ENCODE measurements at regions of chr3 and their contacts with region 1.

Region 1: GRCh38 chr3:137946345-137946973 is 63.5 kb upstream of the CLDN18 start:
- DNase-seq: peak; percentile 81
- H3K4me3 Mint-ChIP-seq: no peak overlapping the region
- H3K27ac Mint-ChIP-seq: no peak overlapping the region
- H3K4me1 Mint-ChIP-seq: no peaks in the 10 kb centered on the region
- H3K27me3 Mint-ChIP-seq: peaks cover 24% of the 10 kb centered on the region
- CTCF ChIP-seq: peak; percentile 77

Region 2: GRCh38 chr3:137032465-137033120 is 913.9 kb before region 1 on chr3:
- CTCF ChIA-PET with region 1: no interaction called
- POLR2A ChIA-PET with region 1: no interaction called
- intact Hi-C with region 1: loop called (anchors 5 kb)
- DNase-seq: peak; percentile 57
- H3K4me3 Mint-ChIP-seq: no peak overlapping the region
- H3K27ac Mint-ChIP-seq: peak overlapping the region; percentile 36
- H3K4me1 Mint-ChIP-seq: peaks cover 8% of the 10 kb centered on the region
- H3K27me3 Mint-ChIP-seq: no peaks in the 10 kb centered on the region
- CTCF ChIP-seq: peak; percentile 77

Region 3: GRCh38 chr3:137105277-137105977 is 841.0 kb before region 1 on chr3:
- CTCF ChIA-PET with region 1: interaction called, 21 read pairs
- POLR2A ChIA-PET with region 1: interaction called, 3 read pairs
- intact Hi-C with region 1: loop called (anchors 1 kb)
- DNase-seq: peak; percentile 69
- H3K4me3 Mint-ChIP-seq: no peak overlapping the region
- H3K27ac Mint-ChIP-seq: no peak overlapping the region
- H3K4me1 Mint-ChIP-seq: no peaks in the 10 kb centered on the region
- H3K27me3 Mint-ChIP-seq: no peaks in the 10 kb centered on the region
- CTCF ChIP-seq: peak; percentile 56

Region 4: DNA sequence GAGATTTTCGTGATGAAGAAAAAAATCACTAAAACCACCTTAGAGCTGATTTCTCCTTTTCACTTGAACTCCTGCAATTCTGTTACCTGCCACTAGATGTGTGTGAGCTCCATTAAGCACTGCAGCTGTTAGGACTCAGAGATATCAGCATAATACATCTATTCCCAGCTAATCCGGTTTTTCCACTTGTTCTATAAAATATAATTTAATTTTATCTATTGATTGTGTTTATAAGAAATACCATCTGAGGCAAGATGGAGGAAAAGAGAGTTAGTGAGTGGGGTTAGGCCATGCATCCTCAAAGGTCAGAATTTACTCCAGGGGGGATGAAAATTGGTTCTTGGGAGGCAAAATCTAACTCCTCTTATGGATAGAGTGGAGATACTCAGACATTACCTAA is 836.0 kb before region 1 on chr3:
- CTCF ChIA-PET with region 1: interaction called, 21 read pairs
- POLR2A ChIA-PET with region 1: interaction called, 3 read pairs
- intact Hi-C with region 1: loop called (anchors 1 kb)
- DNase-seq: peak; percentile 50
- H3K4me3 Mint-ChIP-seq: no peak overlapping the region
- H3K27ac Mint-ChIP-seq: no peak overlapping the region
- H3K4me1 Mint-ChIP-seq: no peaks in the 10 kb centered on the region
- H3K27me3 Mint-ChIP-seq: no peaks in the 10 kb centered on the region
- CTCF ChIP-seq: peak; percentile 77

Region 5: DNA sequence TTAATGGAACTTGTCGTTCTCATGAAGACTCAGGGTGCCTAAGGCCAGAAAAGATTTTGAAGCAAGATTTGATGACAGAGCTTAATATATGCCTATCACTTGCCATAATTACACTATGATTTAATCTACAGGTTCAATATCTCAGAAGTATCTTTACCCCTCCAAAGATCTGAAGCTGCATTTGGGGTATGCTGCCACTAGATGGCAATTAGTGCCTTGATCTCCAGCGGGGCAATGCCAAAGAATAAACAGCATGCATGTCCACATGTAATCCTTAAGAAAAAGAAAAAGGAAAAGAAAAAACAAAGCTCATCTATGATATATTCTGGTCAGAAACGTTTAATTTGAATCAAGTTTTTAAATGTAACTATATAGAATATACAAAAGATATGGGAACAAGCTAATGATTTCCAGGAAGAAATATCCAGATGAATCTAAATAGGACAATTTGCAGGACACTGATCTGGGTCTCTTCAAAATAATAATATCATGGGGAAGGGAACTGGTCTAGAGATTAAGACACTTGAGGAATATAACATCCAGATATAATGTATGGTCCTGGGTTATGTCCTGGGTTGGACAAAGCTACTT is 237.4 kb before region 1 on chr3:
- CTCF ChIA-PET with region 1: interaction called, 14 read pairs
- POLR2A ChIA-PET with region 1: no interaction called
- intact Hi-C with region 1: loop called (anchors 1 kb)
- DNase-seq: peak; percentile 46
- H3K4me3 Mint-ChIP-seq: no peak overlapping the region
- H3K27ac Mint-ChIP-seq: no peak overlapping the region
- H3K4me1 Mint-ChIP-seq: no peaks in the 10 kb centered on the region
- H3K27me3 Mint-ChIP-seq: peaks cover 54% of the 10 kb centered on the region
- CTCF ChIP-seq: peak; percentile 65

Region 6: GRCh38 chr3:137792626-137793271 is 153.7 kb before region 1 on chr3:
- CTCF ChIA-PET with region 1: no interaction called
- POLR2A ChIA-PET with region 1: no interaction called
- intact Hi-C with region 1: no loop called
- DNase-seq: peak; percentile 49
- H3K4me3 Mint-ChIP-seq: no peak overlapping the region
- H3K27ac Mint-ChIP-seq: no peak overlapping the region
- H3K4me1 Mint-ChIP-seq: no peaks in the 10 kb centered on the region
- H3K27me3 Mint-ChIP-seq: peaks cover 74% of the 10 kb centered on the region
- CTCF ChIP-seq: peak; percentile 52

Region 7: DNA sequence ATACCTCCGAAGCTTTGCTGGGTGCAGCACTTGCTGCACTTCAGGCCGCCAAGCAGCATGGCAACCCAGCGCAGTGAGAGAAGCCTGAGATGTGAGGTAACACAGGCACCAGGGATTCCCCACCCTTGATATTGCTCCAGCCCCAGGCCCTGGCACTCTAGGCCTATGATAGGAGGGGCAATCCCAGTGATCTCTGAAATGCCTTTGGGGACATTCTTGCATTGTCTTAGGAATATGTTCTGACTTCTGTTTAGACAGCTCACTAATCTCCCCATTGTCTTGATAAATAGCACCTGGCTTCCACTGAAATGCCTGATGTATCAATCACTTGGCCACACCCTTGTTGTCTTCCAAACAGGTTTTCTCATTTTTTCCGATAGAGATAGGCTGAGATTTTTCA is 79.5 kb before region 1 on chr3:
- CTCF ChIA-PET with region 1: no interaction called
- POLR2A ChIA-PET with region 1: no interaction called
- intact Hi-C with region 1: no loop called
- DNase-seq: peak; percentile 8
- H3K4me3 Mint-ChIP-seq: no peak overlapping the region
- H3K27ac Mint-ChIP-seq: no peak overlapping the region
- H3K4me1 Mint-ChIP-seq: no peaks in the 10 kb centered on the region
- H3K27me3 Mint-ChIP-seq: peaks cover 46% of the 10 kb centered on the region
- CTCF ChIP-seq: no peak

Region 8: DNA sequence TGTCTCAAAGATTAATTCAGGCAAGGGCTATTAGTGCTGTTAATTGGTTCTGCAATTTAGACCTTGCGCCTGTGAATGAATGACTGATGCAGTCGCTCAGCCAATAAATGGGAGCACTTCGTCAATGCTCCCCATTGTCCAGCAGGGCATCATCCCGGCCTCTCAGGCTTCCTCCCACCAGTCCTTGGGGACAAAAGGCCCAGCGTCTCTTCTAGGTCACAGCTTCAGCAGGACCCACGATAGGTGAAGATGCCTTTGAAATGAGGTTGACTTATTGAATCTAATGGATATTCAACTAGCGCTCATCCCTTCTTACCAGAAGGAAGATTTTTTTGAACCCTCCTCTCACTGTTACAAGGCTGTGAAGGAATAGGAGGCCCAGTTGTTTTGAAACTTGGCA is 15.8 kb after region 1 on chr3:
- CTCF ChIA-PET with region 1: interaction called, 15 read pairs
- POLR2A ChIA-PET with region 1: no interaction called
- intact Hi-C with region 1: no loop called
- DNase-seq: no peak
- H3K4me3 Mint-ChIP-seq: no peak overlapping the region
- H3K27ac Mint-ChIP-seq: no peak overlapping the region
- H3K4me1 Mint-ChIP-seq: no peaks in the 10 kb centered on the region
- H3K27me3 Mint-ChIP-seq: peaks cover 44% of the 10 kb centered on the region
- CTCF ChIP-seq: no peak

Region 9: GRCh38 chr3:137970914-137971831 is 24.7 kb after region 1 on chr3:
- CTCF ChIA-PET with region 1: interaction called, 19 read pairs
- POLR2A ChIA-PET with region 1: no interaction called
- intact Hi-C with region 1: no loop called
- DNase-seq: peak; percentile 80
- H3K4me3 Mint-ChIP-seq: no peak overlapping the region
- H3K27ac Mint-ChIP-seq: no peak overlapping the region
- H3K4me1 Mint-ChIP-seq: no peaks in the 10 kb centered on the region
- H3K27me3 Mint-ChIP-seq: no peaks in the 10 kb centered on the region
- CTCF ChIP-seq: peak; percentile 88

Measured in MCF 10A (cell line).